Heart right ventricle (tissue), 16 donors: ENCODE measurements at regions of chr9 and their contacts with region 1.

Region 1: GRCh38 chr9:6106576-6107339 is 91.3 kb upstream of the RANBP6 start:
- DNase-seq: peak in 1 of 2 donors; percentile 19
- ATAC-seq: peak; percentile 63 to 97 (median 91)
- H3K4me3 ChIP-seq: no peak overlapping the region
- H3K27ac ChIP-seq: peak overlapping the region in 9 of 10 donors; percentile 17 to 84 (median 75)
- H3K4me1 ChIP-seq: peaks cover 0 to 17% (median 11%) of the 10 kb centered on the region in 9 donors
- H3K27me3 ChIP-seq: no peaks in the 10 kb centered on the region
- CTCF ChIP-seq: peak in 7 of 9 donors; percentile 40 to 73 (median 51)

Region 2: DNA sequence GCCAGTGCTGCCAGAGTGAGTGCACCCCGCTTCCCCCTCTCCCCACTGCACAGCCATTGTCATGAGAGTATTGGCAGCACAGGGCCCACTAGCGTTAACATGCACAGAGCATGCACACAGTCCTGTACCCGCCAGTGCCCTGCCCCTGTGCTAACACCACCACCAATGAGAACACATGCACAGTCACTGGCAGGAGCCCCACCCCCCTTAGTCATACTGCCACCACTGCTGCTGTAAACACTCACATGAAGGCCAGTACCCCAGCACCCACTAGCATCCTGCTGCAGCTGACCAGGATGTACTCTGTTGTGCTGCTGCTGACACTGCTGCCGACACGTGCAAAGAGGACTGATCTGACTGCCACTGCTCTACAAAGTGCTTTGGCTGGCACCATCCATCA is 71.8 kb before region 1 on chr9:
- intact Hi-C with region 1: no loop called
- DNase-seq: no peak
- ATAC-seq: peak in 2 of 8 donors; percentile 13 to 41
- H3K4me3 ChIP-seq: no peak overlapping the region
- H3K27ac ChIP-seq: no peak overlapping the region
- H3K4me1 ChIP-seq: no peaks in the 10 kb centered on the region
- H3K27me3 ChIP-seq: peaks cover 0 to 12% (median 0%) of the 10 kb centered on the region in 7 donors
- CTCF ChIP-seq: no peak

Region 3: GRCh38 chr9:6055213-6055612 is 51.5 kb before region 1 on chr9:
- intact Hi-C with region 1: loop called in 3 of 10 experiments (anchors 2 to 10 kb)
- DNase-seq: peak in 1 of 2 donors; percentile 32
- ATAC-seq: peak in 7 of 8 donors; percentile 34 to 81 (median 64)
- H3K4me3 ChIP-seq: no peak overlapping the region
- H3K27ac ChIP-seq: no peak overlapping the region
- H3K4me1 ChIP-seq: peaks cover 0 to 5% (median 0%) of the 10 kb centered on the region in 9 donors
- H3K27me3 ChIP-seq: peaks cover 0 to under 1% (median 0%) of the 10 kb centered on the region in 7 donors
- CTCF ChIP-seq: peak; percentile 10 to 62 (median 58)

Region 4: DNA sequence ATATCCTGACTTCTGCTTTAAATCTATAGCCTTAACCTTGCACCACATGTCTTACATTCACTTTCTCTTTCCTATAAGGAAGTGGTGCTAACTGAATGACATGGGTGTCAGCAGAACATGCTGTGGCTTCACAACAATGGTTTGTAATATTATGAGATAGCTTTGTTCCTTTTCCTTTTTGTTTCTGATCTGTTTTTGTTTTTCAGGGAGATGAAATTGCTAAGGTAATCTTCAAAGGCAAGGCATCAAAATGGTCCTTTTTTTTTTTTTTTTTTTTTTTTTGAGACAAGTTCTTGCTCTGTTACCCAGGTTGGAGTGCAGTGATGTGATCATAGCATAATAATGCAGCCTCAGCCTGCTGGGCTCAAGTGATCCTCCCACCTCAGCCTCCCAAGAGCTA is 37.8 kb before region 1 on chr9:
- intact Hi-C with region 1: loop called in 1 of 10 experiments (anchors 10 kb)
- DNase-seq: no peak
- ATAC-seq: peak in 1 of 8 donors; percentile 52
- H3K4me3 ChIP-seq: no peak overlapping the region
- H3K27ac ChIP-seq: peak overlapping the region in 1 of 10 donors; percentile 67
- H3K4me1 ChIP-seq: peaks cover 0 to 12% (median 0%) of the 10 kb centered on the region in 9 donors
- H3K27me3 ChIP-seq: peaks cover 0 to 5% (median 0%) of the 10 kb centered on the region in 7 donors
- CTCF ChIP-seq: no peak

Region 5: GRCh38 chr9:6153425-6153824 is 46.7 kb after region 1 on chr9:
- intact Hi-C with region 1: loop called in 1 of 10 experiments (anchors 10 kb)
- DNase-seq: no peak
- ATAC-seq: no peak
- H3K4me3 ChIP-seq: no peak overlapping the region
- H3K27ac ChIP-seq: no peak overlapping the region
- H3K4me1 ChIP-seq: peaks cover 0 to 4% (median 0%) of the 10 kb centered on the region in 9 donors
- H3K27me3 ChIP-seq: no peaks in the 10 kb centered on the region
- CTCF ChIP-seq: no peak